Activated CD4-positive, alpha-beta T cell treated with anti-CD3 and anti-CD28 coated beads for 36 hours (primary cell): ENCODE measurements at regions of chr5 and their contacts with region 1.

Region 1: DNA sequence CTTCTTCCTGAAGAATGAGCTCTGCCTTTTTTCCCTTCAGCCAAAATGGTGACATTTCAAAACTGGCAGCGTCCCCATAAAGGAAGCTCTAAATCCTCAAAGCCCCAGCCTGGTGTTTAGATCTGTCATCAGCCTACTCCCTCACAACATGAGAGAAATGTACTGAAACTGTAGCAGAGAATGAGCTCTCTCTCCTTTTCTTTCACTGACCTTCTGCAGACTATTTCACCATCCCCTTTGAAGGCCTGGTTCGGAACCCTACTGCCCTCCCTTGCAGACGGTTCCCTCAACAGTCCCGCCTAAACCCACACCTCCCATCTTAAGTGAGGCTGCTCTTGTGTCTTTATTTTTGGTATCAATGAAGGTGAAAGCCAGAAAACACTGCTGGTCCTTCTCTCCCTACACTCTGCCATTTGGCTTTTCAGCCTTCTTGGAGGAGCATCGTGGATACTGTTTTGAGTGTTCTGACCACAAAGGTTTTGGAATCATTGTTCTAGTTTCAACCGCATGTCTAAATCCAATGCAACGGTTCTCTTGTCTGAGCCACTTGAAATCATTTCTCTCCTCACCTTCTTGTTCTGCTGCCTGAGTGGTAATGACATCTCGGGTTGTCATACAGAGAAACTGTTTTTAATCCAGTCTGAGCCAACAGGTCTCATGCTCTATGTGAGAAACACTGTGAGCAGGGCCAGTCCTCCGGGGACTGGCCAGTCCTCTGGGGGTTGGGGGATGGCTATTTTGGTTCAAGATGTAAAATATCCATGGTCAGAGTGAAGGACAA is 39.0 kb downstream of the ITK start:
- DNase-seq: peak; percentile 62
- ATAC-seq: peak; percentile 63
- H3K4me3 Mint-ChIP-seq: peak overlapping the region; percentile 33
- H3K27ac Mint-ChIP-seq: peak overlapping the region; percentile 93
- H3K4me1 Mint-ChIP-seq: peaks cover 90% of the 10 kb centered on the region
- H3K27me3 Mint-ChIP-seq: no peaks in the 10 kb centered on the region

Region 2: GRCh38 chr5:157148734-157149615 is 70.7 kb before region 1 on chr5:
- CTCF ChIA-PET with region 1: interaction called, 25 read pairs
- POLR2A ChIA-PET with region 1: interaction called, 5 read pairs
- intact Hi-C with region 1: loop called (anchors 1 to 2 kb)
- DNase-seq: peak; percentile 88
- ATAC-seq: peak; percentile 66
- H3K4me3 Mint-ChIP-seq: peak overlapping the region; percentile 2
- H3K27ac Mint-ChIP-seq: peak overlapping the region; percentile 74
- H3K4me1 Mint-ChIP-seq: peaks cover 48% of the 10 kb centered on the region
- H3K27me3 Mint-ChIP-seq: no peaks in the 10 kb centered on the region

Region 3: DNA sequence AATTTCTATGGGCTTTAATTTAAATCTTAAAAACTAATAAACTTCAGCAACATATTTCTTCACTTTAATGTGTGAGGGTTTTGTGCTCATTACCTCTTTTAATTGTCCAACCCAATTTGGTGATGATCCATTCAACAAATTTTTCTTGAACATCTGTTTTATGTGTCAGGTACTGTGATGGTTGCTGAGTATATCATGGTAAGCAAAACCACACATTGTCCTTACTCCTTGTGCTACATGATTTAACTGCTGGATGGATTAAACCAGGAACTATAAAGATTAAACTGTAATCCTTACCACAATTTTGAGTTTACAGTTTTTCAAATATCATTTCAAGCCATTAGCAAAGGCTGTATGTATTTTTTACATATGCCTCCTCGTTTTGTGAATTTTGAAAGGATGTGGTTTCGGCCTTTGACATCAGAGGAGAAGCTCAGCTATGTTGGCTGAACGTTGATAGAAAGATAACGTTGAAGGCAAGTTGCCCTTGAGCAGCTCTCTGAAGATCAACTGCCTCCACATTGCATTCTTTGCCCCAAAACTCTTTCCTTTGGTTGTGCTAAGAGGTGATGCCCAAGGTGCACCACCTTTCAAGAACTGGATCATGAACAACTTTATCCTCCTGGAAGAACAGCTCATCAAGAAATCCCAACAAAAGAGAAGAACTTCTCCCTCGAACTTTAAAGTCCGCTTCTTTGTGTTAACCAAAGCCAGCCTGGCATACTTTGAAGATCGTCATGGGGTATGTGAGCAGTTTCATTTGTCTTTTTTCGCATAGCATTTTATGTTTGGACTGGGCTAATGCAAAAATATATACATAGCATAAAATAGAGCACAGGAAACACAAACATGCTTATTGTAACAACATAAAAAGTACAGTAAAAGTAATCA is 39.1 kb before region 1 on chr5 and contains the start of gene ITK:
- CTCF ChIA-PET with region 1: interaction called, 6 read pairs
- POLR2A ChIA-PET with region 1: interaction called, 6 read pairs
- intact Hi-C with region 1: loop called (anchors 1 kb)
- DNase-seq: peak; percentile 52
- ATAC-seq: peak; percentile 45
- H3K4me3 Mint-ChIP-seq: peak within 1 kb of the TSS; percentile 93
- H3K27ac Mint-ChIP-seq: peak within 1 kb of the TSS; percentile 100
- H3K4me1 Mint-ChIP-seq: peaks cover 43% of the 10 kb centered on the region
- H3K27me3 Mint-ChIP-seq: no peaks in the 10 kb centered on the region
- total RNA-seq, gene ITK: 208 to 249 TPM

Region 4: GRCh38 chr5:157204765-157205164 is 14.9 kb before region 1 on chr5:
- CTCF ChIA-PET with region 1: interaction called, 12 read pairs
- POLR2A ChIA-PET with region 1: interaction called, 8 read pairs
- intact Hi-C with region 1: loop called in 1 of 2 experiments (anchors 1 kb)
- DNase-seq: no peak
- ATAC-seq: no peak
- H3K4me3 Mint-ChIP-seq: peak overlapping the region; percentile 62
- H3K27ac Mint-ChIP-seq: peak overlapping the region; percentile 96
- H3K4me1 Mint-ChIP-seq: peaks cover 90% of the 10 kb centered on the region
- H3K27me3 Mint-ChIP-seq: no peaks in the 10 kb centered on the region

Region 5: GRCh38 chr5:157253547-157253946 is 33.9 kb after region 1 on chr5:
- CTCF ChIA-PET with region 1: interaction called, 10 read pairs
- POLR2A ChIA-PET with region 1: interaction called, 6 read pairs
- intact Hi-C with region 1: loop called in 1 of 2 experiments (anchors 1 kb)
- DNase-seq: no peak
- ATAC-seq: no peak
- H3K4me3 Mint-ChIP-seq: peak overlapping the region; percentile 10
- H3K27ac Mint-ChIP-seq: peak overlapping the region; percentile 89
- H3K4me1 Mint-ChIP-seq: peaks cover 96% of the 10 kb centered on the region
- H3K27me3 Mint-ChIP-seq: no peaks in the 10 kb centered on the region

Region 6: DNA sequence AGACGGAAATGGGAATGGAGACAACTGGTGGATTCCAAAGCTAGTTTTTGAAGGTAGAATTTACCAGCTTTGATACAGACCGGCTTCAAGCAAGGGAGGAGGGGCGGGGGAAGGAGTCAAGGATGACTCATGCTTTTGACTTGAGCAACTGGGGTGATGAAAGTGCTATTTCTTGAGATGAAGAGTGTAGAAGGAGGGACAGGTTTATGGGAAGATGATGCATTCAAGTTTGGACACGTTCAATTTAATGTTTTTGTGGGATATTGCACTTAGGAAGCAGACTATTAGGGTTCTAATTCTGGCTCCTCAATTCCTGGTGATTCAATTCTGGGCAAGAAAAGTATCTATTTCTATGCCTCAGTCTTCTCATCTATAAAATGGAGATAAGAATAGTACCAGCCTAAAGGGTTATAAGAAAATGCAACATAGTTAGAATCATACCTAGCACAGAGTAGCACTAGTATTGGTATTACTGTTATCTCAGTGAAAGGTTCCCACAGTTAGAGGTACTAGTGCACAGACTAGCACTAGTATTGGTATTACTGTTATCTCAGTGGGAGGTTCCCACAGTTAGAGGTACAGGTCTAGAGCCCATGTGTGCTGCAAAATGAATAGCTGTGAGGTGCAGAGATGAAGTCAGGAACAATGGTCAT is 245.0 kb after region 1 on chr5:
- CTCF ChIA-PET with region 1: no interaction called
- POLR2A ChIA-PET with region 1: no interaction called
- intact Hi-C with region 1: loop called in 1 of 2 experiments (anchors 2 kb)
- DNase-seq: peak; percentile 87
- ATAC-seq: peak; percentile 92
- H3K4me3 Mint-ChIP-seq: peak overlapping the region; percentile 34
- H3K27ac Mint-ChIP-seq: peak overlapping the region; percentile 84
- H3K4me1 Mint-ChIP-seq: peaks cover 36% of the 10 kb centered on the region
- H3K27me3 Mint-ChIP-seq: peaks cover 18% of the 10 kb centered on the region

Region 7: GRCh38 chr5:157540707-157541446 is 321.2 kb after region 1 on chr5:
- CTCF ChIA-PET with region 1: no interaction called
- POLR2A ChIA-PET with region 1: no interaction called
- intact Hi-C with region 1: no loop called
- DNase-seq: peak; percentile 68
- ATAC-seq: peak; percentile 85
- H3K4me3 Mint-ChIP-seq: peak overlapping the region; percentile 21
- H3K27ac Mint-ChIP-seq: peak overlapping the region; percentile 79
- H3K4me1 Mint-ChIP-seq: peaks cover 73% of the 10 kb centered on the region
- H3K27me3 Mint-ChIP-seq: no peaks in the 10 kb centered on the region

Region 8: GRCh38 chr5:157917899-157918809 is 698.5 kb after region 1 on chr5:
- CTCF ChIA-PET with region 1: no interaction called
- POLR2A ChIA-PET with region 1: no interaction called
- intact Hi-C with region 1: no loop called
- DNase-seq: peak; percentile 86
- ATAC-seq: peak; percentile 87
- H3K4me3 Mint-ChIP-seq: no peak overlapping the region
- H3K27ac Mint-ChIP-seq: peak overlapping the region; percentile 51
- H3K4me1 Mint-ChIP-seq: peaks cover 26% of the 10 kb centered on the region
- H3K27me3 Mint-ChIP-seq: no peaks in the 10 kb centered on the region